ENCODE measurements at regions of chr11 and their contacts with region 1.

Region 1: DNA sequence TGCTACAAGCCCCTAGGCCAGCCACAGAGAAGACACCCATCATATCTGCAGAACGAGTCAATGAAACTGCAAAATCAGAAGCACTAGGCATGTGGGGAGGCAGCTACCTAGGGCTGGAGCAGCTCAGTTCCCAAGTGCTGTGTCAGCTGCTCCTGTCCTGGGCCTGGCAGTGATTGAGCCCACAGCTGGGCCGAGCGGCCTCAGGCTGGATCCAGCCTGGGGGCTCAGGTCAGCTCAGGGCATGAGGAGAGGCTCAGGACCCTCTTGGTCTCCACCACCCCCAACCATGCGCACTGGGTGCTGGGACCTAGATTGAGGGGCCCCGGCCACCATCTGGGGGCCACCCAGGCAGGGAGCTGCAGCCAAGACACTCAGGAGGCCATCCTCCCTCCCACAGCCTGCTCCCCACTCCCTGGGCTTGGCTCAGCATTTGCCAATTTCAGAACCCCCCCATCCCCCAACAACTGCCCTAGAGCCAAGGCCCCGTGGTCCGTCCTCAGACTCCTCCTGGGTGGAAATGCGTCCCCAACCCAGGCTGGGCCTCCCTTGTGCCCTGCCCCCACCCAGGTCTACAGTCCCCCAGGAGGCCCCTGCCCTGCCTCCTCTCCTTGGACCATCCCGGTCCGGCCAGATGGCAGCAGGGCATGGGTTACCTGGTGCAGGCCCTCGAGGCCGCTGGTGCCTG is 2.4 kb upstream of the TNNT3 start:
- DNase-seq: no peak
- ATAC-seq: no peak
- H3K4me3 ChIP-seq: no peak overlapping the region
- H3K27ac ChIP-seq: no peak overlapping the region
- H3K4me1 ChIP-seq: no peaks in the 10 kb centered on the region
- H3K27me3 ChIP-seq: no peaks in the 10 kb centered on the region
- CTCF ChIP-seq: no peak
- POLR2A ChIP-seq: no peak

Region 2: GRCh38 chr11:1896923-1897322 is 20.2 kb before region 1 on chr11:
- intact Hi-C with region 1: loop called (anchors 1 kb)
- DNase-seq: no peak
- ATAC-seq: no peak
- H3K4me3 ChIP-seq: no peak overlapping the region
- H3K27ac ChIP-seq: no peak overlapping the region
- H3K4me1 ChIP-seq: peaks cover 7% of the 10 kb centered on the region
- H3K27me3 ChIP-seq: no peaks in the 10 kb centered on the region
- CTCF ChIP-seq: no peak
- POLR2A ChIP-seq: no peak

Region 3: DNA sequence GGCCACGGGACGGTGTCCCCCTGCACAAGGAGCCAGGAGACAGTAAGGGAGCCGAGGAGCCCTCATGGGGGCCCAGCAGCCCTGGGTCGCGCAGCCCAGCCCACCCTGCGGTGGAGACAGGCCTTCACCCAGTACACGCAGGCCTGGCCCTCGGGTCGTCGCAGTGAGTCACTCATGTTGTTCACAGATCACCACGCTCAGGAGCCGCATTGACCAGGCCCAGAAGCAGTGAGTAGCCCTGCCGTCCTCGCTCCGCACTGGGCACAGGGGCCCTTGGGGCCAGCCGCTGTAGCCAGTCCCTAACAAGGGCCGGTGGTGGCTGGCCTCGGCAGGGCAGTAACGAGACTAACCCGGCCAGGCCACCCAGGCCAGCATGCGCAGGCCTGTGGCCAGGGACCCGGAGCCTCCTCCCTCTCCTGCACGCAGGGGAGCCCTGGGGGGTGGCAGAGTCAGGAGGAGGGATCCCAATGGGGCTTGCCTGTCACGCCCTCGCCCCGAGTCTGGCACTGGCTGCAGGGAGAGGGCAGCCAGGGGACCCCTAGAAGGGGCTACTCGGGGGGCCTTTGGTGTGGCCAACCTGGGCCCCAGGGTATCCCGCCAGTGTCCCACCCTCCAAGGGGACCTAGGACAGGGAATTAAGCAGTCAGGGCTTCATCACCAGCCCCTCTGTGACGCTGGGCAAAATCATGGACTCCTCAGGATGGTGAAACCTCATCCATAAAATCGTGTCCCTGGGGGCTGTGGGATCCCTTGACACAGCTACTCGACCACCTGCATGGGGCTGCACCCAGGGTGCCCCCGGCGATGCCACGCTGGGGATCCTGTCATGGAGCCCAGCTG is 19.9 kb after region 1 on chr11:
- intact Hi-C with region 1: loop called (anchors 2 kb)
- DNase-seq: peak in 1 of 4 donors; percentile 7
- ATAC-seq: no peak
- H3K4me3 ChIP-seq: no peak overlapping the region
- H3K27ac ChIP-seq: no peak overlapping the region
- H3K4me1 ChIP-seq: no peaks in the 10 kb centered on the region
- H3K27me3 ChIP-seq: no peaks in the 10 kb centered on the region
- CTCF ChIP-seq: no peak
- POLR2A ChIP-seq: no peak